GM10248 (cell line): ENCODE measurements at regions of chr17 and their contacts with region 1.

Region 1: DNA sequence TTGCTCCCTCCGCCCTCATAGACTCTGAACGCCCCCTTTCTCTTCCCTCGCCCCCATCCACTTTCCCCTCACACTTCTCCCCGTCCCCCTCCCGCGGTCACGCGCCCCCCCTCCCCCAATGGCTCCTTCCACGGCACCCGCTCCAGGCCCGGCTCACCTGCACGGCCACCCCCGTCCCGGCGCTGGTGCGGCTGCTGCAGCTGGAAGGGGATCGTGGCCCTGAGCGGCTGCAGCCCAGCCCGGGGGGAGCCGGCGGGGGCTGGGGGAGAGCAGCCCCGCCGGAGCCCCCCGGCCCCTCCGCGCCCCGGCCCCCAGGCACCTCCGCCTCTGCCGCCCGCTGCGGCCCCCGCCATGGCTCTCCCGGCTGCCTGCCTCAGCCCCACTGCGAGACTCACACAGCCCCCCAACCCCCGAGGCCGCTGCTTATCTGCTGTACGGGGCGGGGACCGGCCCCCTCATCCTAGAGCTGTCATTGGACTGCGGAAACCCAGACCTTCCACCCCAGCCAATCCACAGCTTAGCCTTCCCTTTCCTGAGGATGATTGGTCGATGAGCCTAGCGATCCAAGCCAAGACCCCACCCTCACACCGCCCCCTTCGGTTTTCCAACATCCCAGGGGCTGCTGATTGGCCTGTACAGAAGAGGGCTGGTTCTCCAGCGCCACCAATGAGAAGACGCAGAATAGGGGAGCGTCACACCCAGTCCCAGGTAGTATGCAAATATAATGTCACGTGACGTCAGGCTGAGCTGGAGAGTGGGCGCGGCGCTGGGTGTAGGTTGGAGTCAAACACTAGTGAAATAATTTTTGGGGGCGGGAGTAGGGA is at the start of gene FAM117A:
- DNase-seq: peak; percentile 99
- CTCF ChIP-seq: no peak

Region 2: DNA sequence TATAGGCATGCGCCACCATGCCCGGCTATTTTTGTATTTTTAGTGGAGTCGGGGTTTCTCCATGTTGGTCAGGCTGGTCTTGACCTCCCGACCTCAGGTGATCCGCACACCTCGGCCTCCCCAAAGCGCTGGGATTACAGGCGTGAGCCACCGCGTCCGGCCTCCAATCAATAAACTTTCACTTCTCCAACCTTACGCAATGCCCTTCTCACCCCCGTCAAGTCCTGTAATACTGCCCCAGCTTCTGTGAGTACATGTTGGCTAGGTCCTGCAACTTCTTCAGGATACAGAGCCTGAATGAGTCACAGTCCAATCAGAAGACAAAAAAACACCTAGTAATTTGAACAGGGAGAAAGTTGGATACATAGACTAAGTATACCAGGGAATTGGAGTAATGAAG is 486.3 kb before region 1 on chr17:
- CTCF ChIA-PET with region 1: no interaction called
- POLR2A ChIA-PET with region 1: interaction called, 14 read pairs
- DNase-seq: no peak
- CTCF ChIP-seq: no peak

Region 3: DNA sequence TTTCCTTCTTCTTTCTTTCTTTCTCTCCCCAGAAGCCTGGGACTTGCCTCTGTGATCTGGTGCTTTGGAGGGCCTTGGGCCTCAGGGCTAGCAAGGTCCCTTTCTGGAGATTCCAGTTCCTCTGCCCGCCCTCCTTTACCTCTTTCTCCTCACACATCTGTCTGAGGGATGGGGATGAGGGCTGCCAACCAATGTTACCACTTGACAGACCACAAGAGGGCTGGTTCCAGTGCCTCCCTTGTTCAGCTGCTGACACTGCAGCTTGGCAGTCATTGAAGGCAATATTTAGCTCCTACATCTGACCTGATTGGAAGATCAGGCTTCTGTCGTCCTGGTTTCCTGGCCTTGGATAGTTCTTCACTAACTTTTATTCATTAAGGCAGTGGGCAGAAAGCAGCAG is 398.3 kb before region 1 on chr17:
- CTCF ChIA-PET with region 1: no interaction called
- POLR2A ChIA-PET with region 1: no interaction called
- DNase-seq: no peak
- CTCF ChIP-seq: no peak

Region 4: GRCh38 chr17:49748791-49749190 is 15.2 kb before region 1 on chr17:
- CTCF ChIA-PET with region 1: interaction called, 50 read pairs
- POLR2A ChIA-PET with region 1: interaction called, 20 read pairs
- DNase-seq: peak; percentile 82
- CTCF ChIP-seq: no peak

Region 5: DNA sequence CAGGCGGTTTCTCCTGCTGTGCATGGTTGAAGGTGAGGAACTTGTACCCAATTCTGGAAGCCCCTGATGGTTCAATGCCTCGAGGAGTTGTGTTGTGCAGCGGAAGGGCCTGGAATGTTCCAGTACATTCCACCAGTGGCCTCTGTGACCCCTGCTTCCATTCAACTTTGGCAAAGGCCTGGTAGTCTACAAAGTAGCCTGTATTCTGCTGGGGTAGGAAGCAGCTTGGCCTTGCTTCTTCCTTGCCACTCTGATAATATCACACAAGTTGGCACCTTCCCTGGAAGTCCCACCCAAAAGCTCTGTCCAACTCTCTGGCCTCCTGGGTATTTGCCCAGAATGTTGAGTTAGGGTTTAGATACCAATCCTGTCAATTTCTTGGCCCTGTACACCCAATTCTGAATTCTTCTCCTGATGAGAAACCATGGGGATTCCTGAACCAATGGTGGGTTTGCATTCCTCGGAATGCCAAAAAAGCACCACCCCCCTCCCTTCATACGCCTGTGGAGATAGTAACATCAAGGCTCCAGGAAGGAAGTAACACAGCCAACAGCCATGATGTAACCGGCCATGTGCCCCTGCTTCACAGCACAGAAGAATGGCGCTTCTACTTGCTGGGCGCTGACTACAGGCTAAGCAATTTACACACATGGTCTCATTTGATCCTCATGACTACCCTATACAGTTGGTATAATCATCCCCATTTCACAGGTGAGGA is 11.8 kb after region 1 on chr17:
- CTCF ChIA-PET with region 1: interaction called, 12 read pairs
- POLR2A ChIA-PET with region 1: interaction called, 7 read pairs
- DNase-seq: no peak
- CTCF ChIP-seq: no peak

Region 6: DNA sequence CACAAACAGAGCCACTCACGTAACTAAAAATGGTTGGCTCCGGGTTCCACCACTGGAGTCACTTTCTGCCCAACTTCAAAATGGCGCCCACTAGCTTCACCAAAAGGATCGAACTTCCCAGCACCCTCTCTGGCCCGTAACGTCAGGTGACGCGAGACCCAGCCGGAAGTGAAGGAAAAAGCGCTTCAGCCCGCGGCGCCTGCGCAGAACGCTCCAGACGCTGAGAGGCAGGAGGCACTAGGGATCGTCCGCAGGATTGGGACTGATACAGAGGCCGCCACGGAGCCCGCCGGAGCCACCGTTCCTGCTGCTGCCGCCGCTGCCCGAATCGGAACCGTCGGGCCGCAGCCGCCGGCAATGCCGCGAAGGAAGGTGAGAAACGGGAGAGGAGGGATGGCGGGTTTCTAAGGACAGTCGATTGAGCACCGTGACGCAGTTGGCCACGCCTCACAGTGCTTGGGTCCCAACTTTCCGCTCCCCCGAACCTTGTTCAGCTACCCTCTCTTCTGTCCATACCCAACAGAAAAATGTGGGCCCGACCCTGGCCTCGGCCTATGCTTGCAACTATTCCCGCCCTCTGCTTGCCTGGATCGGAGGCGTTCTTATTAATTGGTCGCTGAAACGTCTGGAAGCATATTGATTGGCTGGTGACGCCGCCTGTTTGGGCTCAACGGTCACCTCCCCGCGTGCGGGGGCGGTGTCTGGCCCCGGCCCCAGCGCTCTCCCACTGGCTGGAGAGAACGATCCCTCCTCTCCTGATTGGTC is 24.7 kb after region 1 on chr17 and contains the start of gene KAT7:
- CTCF ChIA-PET with region 1: interaction called, 8 read pairs
- POLR2A ChIA-PET with region 1: interaction called, 13 read pairs
- DNase-seq: peak; percentile 97
- CTCF ChIP-seq: no peak

Region 7: GRCh38 chr17:49843774-49844350 is 79.9 kb after region 1 on chr17:
- CTCF ChIA-PET with region 1: no interaction called
- POLR2A ChIA-PET with region 1: no interaction called
- DNase-seq: no peak
- CTCF ChIP-seq: peak; percentile 41